ENCODE measurements at regions of chr2 and their contacts with region 1.

Region 1: GRCh38 chr2:100381240-100381639 is 36.2 kb downstream of the CHST10 start:
- DNase-seq: peak; percentile 84
- H3K4me3 Mint-ChIP-seq: no peak overlapping the region
- H3K27ac Mint-ChIP-seq: no peak overlapping the region
- H3K4me1 Mint-ChIP-seq: no peaks in the 10 kb centered on the region
- H3K27me3 Mint-ChIP-seq: peaks cover 12% of the 10 kb centered on the region

Region 2: GRCh38 chr2:99559075-99559662 is 822.1 kb before region 1 on chr2:
- CTCF ChIA-PET with region 1: interaction called, 12 read pairs
- DNase-seq: peak; percentile 87
- H3K4me3 Mint-ChIP-seq: no peak overlapping the region
- H3K27ac Mint-ChIP-seq: no peak overlapping the region
- H3K4me1 Mint-ChIP-seq: no peaks in the 10 kb centered on the region
- H3K27me3 Mint-ChIP-seq: peaks cover 3% of the 10 kb centered on the region

Region 3: DNA sequence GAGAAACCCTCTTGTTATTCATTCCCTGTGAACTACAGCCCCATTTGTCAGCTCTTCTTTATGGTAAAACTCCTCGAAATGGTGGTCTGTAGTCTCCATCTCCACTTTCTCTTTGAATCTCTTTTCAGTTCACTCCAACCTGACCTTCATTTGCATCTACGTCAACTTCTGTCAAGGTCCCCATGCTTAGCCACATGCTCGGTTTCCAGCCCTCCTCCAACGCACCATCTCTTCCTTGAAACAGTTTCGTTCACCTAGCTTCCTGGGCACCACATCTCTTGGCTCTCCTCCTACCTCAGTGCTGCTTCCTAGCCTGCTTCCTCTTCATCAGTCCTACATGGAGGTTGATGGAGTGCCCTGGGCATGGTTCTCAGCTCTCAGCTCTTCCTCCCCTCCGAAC is 157.7 kb before region 1 on chr2:
- CTCF ChIA-PET with region 1: no interaction called
- DNase-seq: no peak
- H3K4me3 Mint-ChIP-seq: no peak overlapping the region
- H3K27ac Mint-ChIP-seq: no peak overlapping the region
- H3K4me1 Mint-ChIP-seq: no peaks in the 10 kb centered on the region
- H3K27me3 Mint-ChIP-seq: peaks cover 25% of the 10 kb centered on the region

Region 4: GRCh38 chr2:100262555-100263320 is 118.5 kb before region 1 on chr2:
- CTCF ChIA-PET with region 1: interaction called, 196 read pairs
- DNase-seq: peak; percentile 72
- H3K4me3 Mint-ChIP-seq: no peak overlapping the region
- H3K27ac Mint-ChIP-seq: no peak overlapping the region
- H3K4me1 Mint-ChIP-seq: no peaks in the 10 kb centered on the region
- H3K27me3 Mint-ChIP-seq: peaks cover 17% of the 10 kb centered on the region

Region 5: DNA sequence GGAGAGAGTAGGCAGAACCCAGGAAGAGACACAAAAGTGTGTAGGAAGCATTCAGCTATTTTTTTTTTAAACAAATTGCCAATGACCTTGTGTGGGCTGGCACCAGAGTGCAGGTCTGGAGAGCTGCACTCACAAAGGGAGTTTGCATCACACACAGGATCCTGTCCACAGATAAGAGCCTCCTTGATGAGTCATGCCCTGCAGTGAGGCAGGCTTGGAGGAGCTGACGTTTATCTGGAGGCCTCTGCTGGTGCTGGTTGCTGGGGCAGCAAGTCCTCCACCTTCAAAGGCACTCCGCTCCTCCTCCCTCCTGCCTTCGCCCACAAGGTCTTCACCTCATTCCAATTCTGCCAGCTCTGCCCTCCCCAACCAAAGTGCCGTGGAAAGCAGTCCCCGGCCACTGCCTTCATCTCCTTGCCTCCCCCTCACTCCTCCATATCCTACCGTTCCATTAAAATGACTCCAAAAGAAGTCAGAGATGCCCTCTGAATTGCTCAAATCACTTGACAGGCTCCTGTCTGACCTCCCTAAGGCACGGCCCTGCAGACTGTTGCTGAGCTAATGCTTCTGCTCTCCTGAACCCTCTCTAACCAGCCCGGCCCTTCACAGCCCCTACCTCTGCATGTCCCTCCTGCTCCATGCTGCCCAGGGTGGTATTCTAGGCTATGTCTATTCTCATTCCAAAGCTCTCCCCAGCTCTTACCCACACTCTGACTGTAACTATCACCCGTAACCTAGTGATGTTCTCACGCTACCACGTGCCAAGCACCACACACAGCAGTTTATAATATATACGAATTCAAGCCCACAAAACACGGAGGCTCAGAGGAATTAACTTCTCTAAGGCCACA is 89.9 kb before region 1 on chr2:
- CTCF ChIA-PET with region 1: interaction called, 12 read pairs
- DNase-seq: peak; percentile 72
- H3K4me3 Mint-ChIP-seq: no peak overlapping the region
- H3K27ac Mint-ChIP-seq: no peak overlapping the region
- H3K4me1 Mint-ChIP-seq: peaks cover under 1% of the 10 kb centered on the region
- H3K27me3 Mint-ChIP-seq: peaks cover 19% of the 10 kb centered on the region

Region 6: DNA sequence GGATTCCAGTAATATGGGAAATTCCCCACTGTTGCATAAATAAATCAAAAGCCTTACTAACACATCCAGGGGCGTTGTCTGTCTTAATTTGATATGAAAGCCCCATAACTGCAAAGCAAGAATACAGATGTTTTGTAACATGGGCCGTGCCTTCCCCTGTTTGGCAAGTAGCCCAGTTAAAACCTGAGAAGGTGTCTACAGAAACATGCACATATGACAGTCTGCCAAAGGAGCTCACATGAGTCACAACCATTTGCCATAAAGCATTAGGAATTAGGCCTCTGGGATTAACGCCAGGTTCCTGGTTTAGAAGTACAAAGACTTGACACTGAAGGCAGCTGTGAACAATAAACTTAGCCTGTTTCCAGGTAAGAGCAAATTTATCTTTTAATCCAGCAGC is 15.8 kb before region 1 on chr2:
- CTCF ChIA-PET with region 1: interaction called, 12 read pairs
- DNase-seq: no peak
- H3K4me3 Mint-ChIP-seq: no peak overlapping the region
- H3K27ac Mint-ChIP-seq: no peak overlapping the region
- H3K4me1 Mint-ChIP-seq: peaks cover 4% of the 10 kb centered on the region
- H3K27me3 Mint-ChIP-seq: peaks cover 23% of the 10 kb centered on the region

Region 7: GRCh38 chr2:100391735-100392515 is 10.7 kb after region 1 on chr2:
- CTCF ChIA-PET with region 1: interaction called, 18 read pairs
- DNase-seq: no peak
- H3K4me3 Mint-ChIP-seq: no peak overlapping the region
- H3K27ac Mint-ChIP-seq: no peak overlapping the region
- H3K4me1 Mint-ChIP-seq: no peaks in the 10 kb centered on the region
- H3K27me3 Mint-ChIP-seq: peaks cover 3% of the 10 kb centered on the region

Region 8: GRCh38 chr2:100412881-100413321 is 31.7 kb after region 1 on chr2:
- CTCF ChIA-PET with region 1: interaction called, 13 read pairs
- DNase-seq: no peak
- H3K4me3 Mint-ChIP-seq: no peak overlapping the region
- H3K27ac Mint-ChIP-seq: peak overlapping the region; percentile 46
- H3K4me1 Mint-ChIP-seq: peaks cover 12% of the 10 kb centered on the region
- H3K27me3 Mint-ChIP-seq: peaks cover 8% of the 10 kb centered on the region

Region 9: GRCh38 chr2:100679211-100679610 is 298.0 kb after region 1 on chr2:
- CTCF ChIA-PET with region 1: no interaction called
- DNase-seq: no peak
- H3K4me3 Mint-ChIP-seq: no peak overlapping the region
- H3K27ac Mint-ChIP-seq: no peak overlapping the region
- H3K4me1 Mint-ChIP-seq: peaks cover 9% of the 10 kb centered on the region
- H3K27me3 Mint-ChIP-seq: peaks cover 18% of the 10 kb centered on the region

Region 10: GRCh38 chr2:100919316-100919875 is 538.2 kb after region 1 on chr2:
- CTCF ChIA-PET with region 1: no interaction called
- DNase-seq: peak; percentile 42
- H3K4me3 Mint-ChIP-seq: no peak overlapping the region
- H3K27ac Mint-ChIP-seq: no peak overlapping the region
- H3K4me1 Mint-ChIP-seq: peaks cover 7% of the 10 kb centered on the region
- H3K27me3 Mint-ChIP-seq: no peaks in the 10 kb centered on the region